ENCODE measurements at regions of chr3 and their contacts with region 1.

Region 1: GRCh38 chr3:149808209-149808829 is 4.7 kb upstream of the RNF13 start:
- DNase-seq: peak; percentile 70
- ATAC-seq: peak; percentile 31
- H3K4me3 ChIP-seq: no peak overlapping the region
- H3K27ac ChIP-seq: no peak overlapping the region
- H3K4me1 ChIP-seq: peaks cover 19 to 34% of the 10 kb centered on the region in 2 experiments
- H3K27me3 ChIP-seq: no peaks in the 10 kb centered on the region
- CTCF ChIP-seq: peak; percentile 67 to 91 (median 77)
- POLR2A ChIP-seq: no peak
- RAD21 ChIP-seq: peak; percentile 74

Region 2: DNA sequence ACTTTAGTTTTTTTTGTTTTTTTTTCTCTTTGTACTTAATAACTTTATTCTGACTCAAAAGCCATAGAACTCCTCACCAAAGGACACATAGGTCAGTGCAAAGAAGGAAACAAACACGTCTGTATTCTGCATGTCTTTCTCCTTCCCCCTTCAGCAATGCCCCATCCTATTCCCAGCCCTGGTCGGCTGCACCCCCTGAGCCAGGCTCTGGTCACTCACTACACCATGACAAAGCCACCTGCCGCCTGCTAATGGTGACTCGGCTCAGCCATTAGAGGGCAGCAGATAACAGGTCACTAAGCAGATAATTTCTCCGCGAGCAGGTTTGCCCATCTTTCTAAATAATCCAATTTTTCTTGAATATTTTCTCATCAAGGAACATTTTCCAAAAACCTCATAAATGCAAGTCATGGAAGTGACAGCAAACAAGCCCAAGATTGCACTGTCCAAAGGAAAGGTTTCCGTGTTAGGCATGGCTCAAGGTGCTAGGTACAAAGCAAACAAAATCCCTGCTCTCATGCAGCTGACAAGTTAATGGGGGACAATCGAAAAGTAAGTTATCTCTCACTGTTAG is 296.0 kb before region 1 on chr3:
- CTCF ChIA-PET with region 1: interaction called, 13 read pairs
- POLR2A ChIA-PET with region 1: interaction called, 3 read pairs
- RAD21 ChIA-PET with region 1: no interaction called
- intact Hi-C with region 1: loop called (anchors 1 kb)
- DNase-seq: peak; percentile 50
- ATAC-seq: peak; percentile 99
- H3K4me3 ChIP-seq: no peak overlapping the region
- H3K27ac ChIP-seq: no peak overlapping the region
- H3K4me1 ChIP-seq: no peaks in the 10 kb centered on the region
- H3K27me3 ChIP-seq: no peaks in the 10 kb centered on the region
- CTCF ChIP-seq: peak; percentile 80 to 94 (median 92)
- POLR2A ChIP-seq: no peak
- RAD21 ChIP-seq: peak; percentile 96

Region 3: GRCh38 chr3:149765762-149766334 is 42.5 kb before region 1 on chr3:
- CTCF ChIA-PET with region 1: interaction called, 47 read pairs
- POLR2A ChIA-PET with region 1: no interaction called
- RAD21 ChIA-PET with region 1: interaction called, 4 to 6 read pairs
- intact Hi-C with region 1: loop called (anchors 1 kb)
- DNase-seq: no peak
- ATAC-seq: peak; percentile 79
- H3K4me3 ChIP-seq: no peak overlapping the region
- H3K27ac ChIP-seq: no peak overlapping the region
- H3K4me1 ChIP-seq: no peaks in the 10 kb centered on the region
- H3K27me3 ChIP-seq: peaks cover 3% of the 10 kb centered on the region; the same call in 1 of the 2 replicates
- CTCF ChIP-seq: peak; percentile 50 to 64 (median 56)
- POLR2A ChIP-seq: no peak
- RAD21 ChIP-seq: peak; percentile 72

Region 4: DNA sequence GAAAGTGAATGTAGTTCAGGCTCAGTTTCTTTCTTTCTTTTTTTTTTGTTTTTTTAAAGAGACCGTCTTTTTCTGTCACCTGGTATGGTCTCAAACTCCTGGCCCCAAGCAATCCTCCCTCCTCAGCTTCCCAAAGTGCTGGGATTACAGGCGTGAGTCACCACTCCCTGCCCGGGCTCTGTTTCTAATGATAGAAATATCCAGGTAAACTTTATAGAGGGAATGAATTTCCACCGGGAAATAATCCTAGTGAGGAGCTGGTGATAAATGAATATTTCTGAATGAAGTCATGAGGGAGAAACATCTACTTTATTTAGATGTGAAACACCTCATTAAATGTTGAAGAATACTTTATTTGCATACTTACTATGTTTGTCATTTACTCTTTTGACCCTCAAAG is 11.9 kb after region 1 on chr3:
- CTCF ChIA-PET with region 1: interaction called, 13 read pairs
- POLR2A ChIA-PET with region 1: interaction called, 5 read pairs
- RAD21 ChIA-PET with region 1: no interaction called
- intact Hi-C with region 1: no loop called
- DNase-seq: peak; percentile 35
- ATAC-seq: peak; percentile 90
- H3K4me3 ChIP-seq: peak overlapping the region in 1 of 2 experiments; percentile 27; a peak in 1 of 4 replicates
- H3K27ac ChIP-seq: peak overlapping the region; percentile 43; the same call in 1 of the 2 replicates
- H3K4me1 ChIP-seq: peaks cover 13 to 20% of the 10 kb centered on the region in 2 experiments; a peak in 3 of 4 replicates
- H3K27me3 ChIP-seq: no peaks in the 10 kb centered on the region
- CTCF ChIP-seq: no peak
- POLR2A ChIP-seq: no peak
- RAD21 ChIP-seq: no peak